ENCODE measurements at regions of chr16 and their contacts with region 1.

Region 1: GRCh38 chr16:9008601-9009260 is 45.0 kb upstream of the USP7 start:
- DNase-seq: peak; percentile 84

Region 2: GRCh38 chr16:8660841-8661301 is 347.9 kb before region 1 on chr16:
- intact Hi-C with region 1: loop called (anchors 5 kb)
- DNase-seq: no peak

Region 3: DNA sequence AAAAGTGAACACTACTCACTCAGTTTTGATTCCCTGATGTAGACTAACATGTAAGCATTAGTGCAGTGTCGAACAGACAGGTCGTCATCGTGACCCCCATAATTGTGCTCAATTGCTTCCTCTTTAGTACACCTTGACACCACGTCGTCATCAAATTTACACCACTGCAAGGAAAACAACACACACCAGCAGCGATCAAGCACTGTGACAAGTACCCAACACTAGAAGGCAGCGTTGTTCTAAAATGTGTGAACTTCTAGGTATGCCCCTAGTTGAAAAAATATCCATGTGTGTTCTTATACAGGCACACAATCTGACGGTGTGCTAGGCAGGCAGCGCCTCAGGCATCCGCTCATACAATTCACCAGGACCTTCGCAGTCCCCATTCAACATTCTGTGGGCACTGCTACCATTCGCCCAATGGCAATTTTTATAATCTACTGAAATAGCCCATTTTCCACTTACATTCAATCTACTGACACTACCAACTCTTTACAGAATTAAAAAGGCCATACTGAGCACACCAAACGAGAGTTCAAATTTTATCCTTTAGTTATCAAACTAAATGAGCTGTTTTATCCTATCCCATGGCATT is 103.5 kb before region 1 on chr16:
- intact Hi-C with region 1: loop called (anchors 10 kb)
- DNase-seq: no peak

Region 4: DNA sequence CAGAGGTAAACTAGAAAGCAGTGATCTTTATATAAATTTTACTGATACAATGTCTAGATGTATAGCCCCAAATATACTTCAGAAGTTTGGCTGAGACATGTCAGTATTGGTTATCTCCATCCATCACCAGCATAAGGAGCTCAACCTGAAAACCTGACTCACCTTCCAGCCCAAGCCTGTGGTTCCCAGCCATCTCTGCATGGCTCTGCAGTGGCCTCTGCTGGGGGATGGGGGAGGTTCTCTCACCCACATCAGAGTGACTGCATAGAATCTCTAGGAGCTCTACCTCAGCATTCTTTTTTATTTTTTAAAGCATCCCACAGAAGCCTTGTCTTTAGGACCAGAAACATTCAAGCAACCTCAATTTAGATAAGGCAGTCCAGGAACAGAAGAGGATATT is 72.3 kb before region 1 on chr16:
- intact Hi-C with region 1: loop called (anchors 10 kb)
- DNase-seq: no peak